ENCODE measurements at regions of chr6 and their contacts with region 1.

Region 1: DNA sequence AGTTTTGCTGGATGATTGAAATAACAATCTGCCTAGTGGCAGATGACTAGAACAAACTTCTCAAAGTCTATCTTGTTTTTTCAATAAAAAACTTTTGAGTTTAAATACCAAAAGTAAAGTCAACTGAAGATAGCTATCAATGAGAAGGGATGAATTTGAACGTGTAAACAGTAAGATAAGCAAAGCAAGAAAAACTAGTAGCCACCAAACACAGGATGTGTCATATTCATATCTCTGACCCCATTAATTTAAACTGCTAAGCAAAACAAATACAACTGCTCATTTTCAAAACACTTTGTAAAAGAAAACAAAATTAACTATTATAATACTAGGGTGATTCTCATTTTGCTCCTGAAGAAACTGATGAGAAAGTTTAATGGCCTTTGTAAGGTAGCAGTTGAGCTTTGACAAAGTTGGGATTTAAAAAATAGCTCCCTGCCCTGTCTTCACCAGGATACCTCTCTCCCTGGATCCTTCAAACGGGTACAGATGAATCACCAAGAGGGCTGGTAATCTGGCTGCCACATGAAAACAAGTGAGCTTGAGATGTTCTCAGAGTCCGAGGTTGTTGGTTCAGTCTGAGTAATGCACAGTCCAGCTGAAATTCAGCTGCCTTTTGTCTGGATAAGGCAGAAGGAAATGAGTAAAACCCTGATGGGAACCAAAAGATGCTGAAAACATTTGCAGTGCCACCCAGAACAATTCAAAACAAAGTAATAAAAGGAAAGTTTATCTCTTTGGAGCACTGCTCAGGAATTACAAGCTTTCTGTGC is 86.6 kb downstream of the GJA1 start:
- DNase-seq: peak; percentile 93
- H3K4me3 ChIP-seq: peak overlapping the region; percentile 24; the same call in 1 of the 2 replicates
- CTCF ChIP-seq: no peak

Region 2: GRCh38 chr6:121436960-121437850 is 84.9 kb before region 1 on chr6:
- CTCF ChIA-PET with region 1: interaction called, 3 read pairs
- POLR2A ChIA-PET with region 1: interaction called, 26 read pairs
- DNase-seq: no peak
- H3K4me3 ChIP-seq: peak overlapping the region; percentile 87
- CTCF ChIP-seq: no peak

Region 3: DNA sequence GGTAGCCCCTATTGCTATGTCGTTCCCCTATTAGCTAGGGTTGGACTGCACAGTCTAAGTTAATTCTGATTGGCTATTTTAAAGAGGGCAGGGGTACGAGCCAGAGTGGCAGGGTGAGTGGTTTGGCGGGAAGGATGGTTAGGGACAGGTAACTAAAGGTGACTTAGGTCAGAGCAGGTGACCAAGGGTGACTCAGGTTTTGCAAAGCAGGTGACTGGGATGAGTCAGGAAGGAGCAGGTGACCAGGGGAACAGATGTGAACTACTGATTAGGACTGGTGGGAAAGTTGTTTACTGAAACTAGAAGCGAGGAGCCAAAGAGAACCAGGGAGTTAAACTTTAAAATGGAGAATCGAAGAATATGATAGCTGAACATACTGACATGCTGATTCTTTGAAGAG is 208.5 kb after region 1 on chr6:
- CTCF ChIA-PET with region 1: no interaction called
- POLR2A ChIA-PET with region 1: no interaction called
- DNase-seq: no peak
- H3K4me3 ChIP-seq: no peak overlapping the region
- CTCF ChIP-seq: no peak

Measured in AG04449 (cell line).